ENCODE measurements at regions of chr16 and their contacts with region 1.

Region 1: DNA sequence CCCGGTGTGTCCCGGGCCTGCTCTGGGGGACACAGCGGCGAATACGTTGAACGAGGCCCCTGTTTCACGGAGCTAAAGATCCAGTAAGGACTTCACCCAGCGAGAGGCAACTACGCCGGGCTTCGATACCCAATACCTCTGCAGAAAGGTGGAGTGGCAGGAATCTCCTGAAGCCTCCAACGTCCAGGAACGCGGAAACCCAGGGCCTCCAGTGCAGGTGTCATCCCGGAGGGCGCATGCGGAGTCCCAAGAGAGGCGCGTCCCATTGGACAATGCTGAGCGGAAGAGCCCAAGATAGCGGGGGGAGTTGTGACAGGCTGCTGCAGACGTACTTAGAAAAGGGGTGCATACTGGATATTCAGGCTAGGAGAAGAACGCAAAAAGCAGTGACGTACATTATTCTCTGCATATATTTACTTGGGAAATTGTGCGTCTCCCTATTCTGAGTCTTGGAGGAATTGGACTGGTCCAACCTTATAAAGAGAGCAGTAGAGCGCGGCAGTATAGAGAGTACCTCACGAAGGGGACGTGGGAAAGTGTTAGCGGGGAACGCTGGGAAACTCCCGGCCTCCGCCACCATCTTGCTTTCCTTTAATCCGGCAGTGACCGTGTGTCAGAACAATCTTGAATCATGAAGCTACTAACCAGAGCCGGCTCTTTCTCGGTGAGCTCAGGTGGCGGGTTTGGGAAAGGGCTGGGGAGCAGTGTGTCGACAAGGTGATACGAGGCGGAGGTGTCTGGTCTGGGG is at the start of gene UQCRC2:
- DNase-seq: peak; percentile 96
- H3K4me3 Mint-ChIP-seq: peak within 1 kb of the TSS; percentile 98
- H3K27ac Mint-ChIP-seq: peak within 1 kb of the TSS; percentile 97
- H3K4me1 Mint-ChIP-seq: peaks cover 32% of the 10 kb centered on the region
- H3K27me3 Mint-ChIP-seq: no peaks in the 10 kb centered on the region
- total RNA-seq, gene UQCRC2: 256 and 266 TPM in 2 replicates

Region 2: GRCh38 chr16:21526923-21527807 is 425.8 kb before region 1 on chr16:
- intact Hi-C with region 1: loop called (anchors 10 kb)
- DNase-seq: no peak
- H3K4me3 Mint-ChIP-seq: no peak overlapping the region
- H3K27ac Mint-ChIP-seq: no peak overlapping the region
- H3K4me1 Mint-ChIP-seq: peaks cover 3% of the 10 kb centered on the region
- H3K27me3 Mint-ChIP-seq: peaks cover 19% of the 10 kb centered on the region

Region 3: DNA sequence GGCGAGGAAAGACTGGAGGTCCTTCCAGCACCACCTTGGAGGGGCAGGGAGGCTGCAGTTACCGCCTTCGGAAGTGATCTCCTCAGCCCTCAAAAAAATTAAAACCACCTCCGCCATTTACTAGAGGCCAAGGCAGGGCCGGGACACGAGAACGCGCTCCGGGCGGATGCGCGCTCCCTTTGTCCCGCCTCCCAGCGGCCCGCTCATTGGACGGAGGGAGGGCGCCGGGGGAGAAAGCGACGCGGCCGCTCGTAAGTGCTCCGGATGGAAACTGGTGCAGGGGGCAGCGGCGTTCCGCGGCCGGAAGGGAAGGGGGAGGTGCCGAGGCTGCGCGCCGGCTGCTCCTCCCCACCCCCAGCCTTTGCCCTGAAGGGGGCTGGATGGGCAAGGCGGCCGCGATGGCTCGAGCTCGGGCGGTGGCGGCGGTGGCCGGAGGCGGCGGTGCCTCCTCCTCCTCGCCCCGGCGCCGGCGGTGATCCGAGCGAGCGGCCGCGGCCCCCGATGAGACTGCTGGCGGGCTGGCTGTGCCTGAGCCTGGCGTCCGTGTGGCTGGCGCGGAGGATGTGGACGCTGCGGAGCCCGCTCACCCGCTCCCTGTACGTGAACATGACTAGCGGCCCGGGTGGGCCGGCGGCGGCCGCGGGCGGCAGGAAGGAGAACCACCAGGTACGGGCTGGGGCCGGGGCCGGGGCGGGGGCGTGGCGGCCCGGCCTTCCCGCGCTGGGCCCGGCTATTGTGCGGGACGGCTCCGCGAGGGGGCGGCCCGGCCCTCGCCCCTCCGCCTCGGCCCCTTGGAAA is 353.5 kb before region 1 on chr16 and contains the start of gene METTL9:
- intact Hi-C with region 1: loop called (anchors 10 kb)
- DNase-seq: peak; percentile 99
- H3K4me3 Mint-ChIP-seq: peak within 1 kb of the TSS; percentile 97
- H3K27ac Mint-ChIP-seq: peak within 1 kb of the TSS; percentile 93
- H3K4me1 Mint-ChIP-seq: peaks cover 45% of the 10 kb centered on the region
- H3K27me3 Mint-ChIP-seq: no peaks in the 10 kb centered on the region
- total RNA-seq, gene METTL9: 65.6 and 66.7 TPM in 2 replicates

Region 4: DNA sequence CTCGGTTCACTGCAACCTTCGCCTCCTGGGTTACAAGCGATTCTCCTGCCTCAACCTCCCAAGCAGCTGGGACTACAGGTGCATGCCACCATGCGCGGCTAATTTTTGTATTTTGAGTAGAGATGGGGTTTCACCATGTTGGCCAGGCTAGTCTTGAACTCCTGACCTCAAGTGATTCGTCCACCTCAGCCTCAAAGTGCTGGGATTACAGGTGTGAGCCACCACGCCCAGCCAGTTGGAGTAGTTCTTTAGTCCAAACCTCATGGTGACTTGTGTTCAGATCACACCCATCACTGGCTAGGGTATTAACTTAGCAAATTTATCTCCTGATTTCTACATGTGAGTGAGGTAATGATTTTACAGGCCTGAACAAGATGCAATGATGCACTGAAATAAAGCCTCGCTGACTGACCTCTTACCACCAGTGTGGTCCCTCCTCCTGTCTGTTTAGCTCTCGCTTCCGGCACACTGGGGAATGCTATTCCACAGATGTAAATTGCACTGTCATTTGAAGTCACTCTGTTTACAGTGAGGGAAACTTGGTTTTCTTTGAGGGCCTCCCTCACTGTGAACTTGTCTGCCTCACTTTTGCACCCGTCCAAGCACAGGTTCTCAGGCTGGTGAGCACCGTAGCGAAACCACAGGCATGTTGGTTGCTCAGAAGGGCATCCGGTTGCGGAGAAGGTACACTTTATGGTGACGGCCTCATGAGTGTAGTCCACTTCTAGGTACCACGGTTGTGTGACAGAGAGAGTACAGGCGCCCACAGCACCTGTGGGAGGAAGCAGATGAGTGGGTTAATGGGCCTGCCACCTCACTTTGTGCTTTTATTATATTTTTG is 306.0 kb before region 1 on chr16:
- intact Hi-C with region 1: loop called (anchors 5 kb)
- DNase-seq: peak; percentile 92
- H3K4me3 Mint-ChIP-seq: peak overlapping the region; percentile 78
- H3K27ac Mint-ChIP-seq: peak overlapping the region; percentile 91
- H3K4me1 Mint-ChIP-seq: peaks cover 39% of the 10 kb centered on the region
- H3K27me3 Mint-ChIP-seq: no peaks in the 10 kb centered on the region

Region 5: GRCh38 chr16:22297114-22297878 is 344.3 kb after region 1 on chr16 and contains the start of gene POLR3E:
- intact Hi-C with region 1: loop called (anchors 1 kb)
- DNase-seq: peak; percentile 100
- H3K4me3 Mint-ChIP-seq: peak within 1 kb of the TSS; percentile 94
- H3K27ac Mint-ChIP-seq: peak within 1 kb of the TSS; percentile 97
- H3K4me1 Mint-ChIP-seq: peaks cover 33% of the 10 kb centered on the region
- H3K27me3 Mint-ChIP-seq: no peaks in the 10 kb centered on the region
- total RNA-seq, gene POLR3E: 102 and 111 TPM in 2 replicates

Region 6: GRCh38 chr16:23466066-23466885 is 1513.3 kb after region 1 on chr16:
- intact Hi-C with region 1: no loop called
- DNase-seq: no peak
- H3K4me3 Mint-ChIP-seq: no peak overlapping the region
- H3K27ac Mint-ChIP-seq: no peak overlapping the region
- H3K4me1 Mint-ChIP-seq: no peaks in the 10 kb centered on the region
- H3K27me3 Mint-ChIP-seq: no peaks in the 10 kb centered on the region

Measured in activated CD4-positive, alpha-beta T cell treated with anti-CD3 and anti-CD28 coated beads, Interleukin-2, amount 10 ng/mL, durations not matched to agents 24 days and 14 days (primary cell).